ENCODE measurements at regions of chr15 and their contacts with region 1.

Region 1: GRCh38 chr15:44033894-44034293 is 161.2 kb downstream of the FRMD5 start:
- DNase-seq: peak; percentile 94
- H3K4me3 ChIP-seq: no peak overlapping the region
- H3K27ac ChIP-seq: peak overlapping the region; percentile 52
- H3K4me1 ChIP-seq: peaks cover 42% of the 10 kb centered on the region
- H3K27me3 ChIP-seq: no peaks in the 10 kb centered on the region
- CTCF ChIP-seq: no peak
- POLR2A ChIP-seq: no peak

Region 2: DNA sequence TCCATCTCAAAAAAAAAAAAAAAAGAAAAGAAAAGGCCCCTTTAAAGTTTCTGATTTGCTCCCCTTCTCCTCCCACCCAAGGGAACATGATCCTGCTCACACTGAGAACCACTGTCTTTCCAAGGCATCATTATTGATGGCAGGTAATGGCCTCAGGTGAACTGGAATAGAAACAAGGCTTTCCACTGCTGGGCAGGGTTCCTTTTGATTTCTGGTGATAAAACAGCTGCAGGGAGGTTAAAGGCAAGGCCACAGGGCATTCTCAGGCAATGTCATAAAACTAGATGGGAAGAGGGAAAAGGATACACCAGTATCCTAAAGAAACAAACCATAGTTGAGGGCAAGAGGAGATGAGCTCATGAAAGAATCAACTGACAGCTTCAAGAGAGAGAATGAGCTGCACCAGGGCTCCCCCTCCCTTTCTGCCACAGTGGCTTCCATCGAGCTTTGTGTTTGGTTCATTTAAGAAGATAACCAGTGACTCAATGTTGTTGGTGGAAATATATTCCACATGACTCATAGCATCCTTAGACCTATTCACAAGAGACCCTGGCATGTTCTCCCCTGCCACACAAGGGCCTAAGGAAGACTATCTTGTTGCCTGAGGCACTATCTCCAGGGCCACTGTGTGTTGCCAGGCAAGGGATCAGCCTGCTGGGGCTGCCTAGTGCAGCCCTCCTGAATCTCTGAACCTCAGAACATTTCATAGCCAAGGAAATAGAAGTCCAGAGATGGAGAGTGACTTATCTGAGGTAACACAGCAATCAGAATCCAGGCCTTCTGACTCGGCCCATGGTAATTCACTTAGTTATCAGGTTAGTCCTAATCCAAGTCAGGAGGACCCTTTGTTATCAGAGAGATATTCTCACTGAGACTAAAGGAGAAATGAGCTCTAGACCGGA is 120.6 kb before region 1 on chr15:
- CTCF ChIA-PET with region 1: interaction called, 4 read pairs
- POLR2A ChIA-PET with region 1: no interaction called
- dilution Hi-C with region 1: no loop called
- intact Hi-C with region 1: loop called (anchors 1 kb)
- DNase-seq: peak; percentile 98
- H3K4me3 ChIP-seq: no peak overlapping the region
- H3K27ac ChIP-seq: peak overlapping the region; percentile 89
- H3K4me1 ChIP-seq: peaks cover 38% of the 10 kb centered on the region
- H3K27me3 ChIP-seq: no peaks in the 10 kb centered on the region
- CTCF ChIP-seq: no peak
- POLR2A ChIP-seq: peak; percentile 46

Region 3: GRCh38 chr15:43998607-43999006 is 35.3 kb before region 1 on chr15:
- CTCF ChIA-PET with region 1: interaction called, 3 read pairs
- POLR2A ChIA-PET with region 1: no interaction called
- dilution Hi-C with region 1: no loop called
- intact Hi-C with region 1: loop called (anchors 2 kb)
- DNase-seq: peak; percentile 93
- H3K4me3 ChIP-seq: peak overlapping the region in 1 of 3 experiments; percentile 37
- H3K27ac ChIP-seq: peak overlapping the region; percentile 71
- H3K4me1 ChIP-seq: peaks cover 23% of the 10 kb centered on the region
- H3K27me3 ChIP-seq: no peaks in the 10 kb centered on the region
- CTCF ChIP-seq: no peak
- POLR2A ChIP-seq: no peak

Region 4: DNA sequence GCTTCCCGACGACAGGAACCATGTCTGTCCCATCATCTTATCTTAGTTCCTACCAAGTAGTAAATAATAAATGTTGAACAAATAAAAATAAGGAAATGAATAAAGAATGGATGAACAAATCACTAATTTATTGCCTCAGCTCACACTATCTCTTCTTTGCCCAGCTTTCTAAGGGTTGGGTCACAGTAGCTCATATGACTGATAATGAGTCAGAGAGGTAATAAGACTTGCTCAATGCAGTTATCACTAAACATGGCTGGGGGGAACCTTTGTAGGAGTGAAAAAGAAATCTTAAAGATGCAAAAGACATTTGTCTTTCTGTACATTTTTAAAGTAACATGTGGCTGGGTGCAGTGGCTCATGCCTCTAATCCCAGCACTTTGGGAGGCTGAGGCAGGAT is 24.8 kb before region 1 on chr15:
- CTCF ChIA-PET with region 1: interaction called, 11 read pairs
- POLR2A ChIA-PET with region 1: interaction called, 3 read pairs
- dilution Hi-C with region 1: no loop called
- intact Hi-C with region 1: no loop called
- DNase-seq: peak; percentile 40
- H3K4me3 ChIP-seq: no peak overlapping the region
- H3K27ac ChIP-seq: no peak overlapping the region
- H3K4me1 ChIP-seq: peaks cover 8% of the 10 kb centered on the region
- H3K27me3 ChIP-seq: no peaks in the 10 kb centered on the region
- CTCF ChIP-seq: no peak
- POLR2A ChIP-seq: no peak

Region 5: GRCh38 chr15:44130778-44131177 is 96.9 kb after region 1 on chr15:
- CTCF ChIA-PET with region 1: no interaction called
- POLR2A ChIA-PET with region 1: no interaction called
- dilution Hi-C with region 1: no loop called
- intact Hi-C with region 1: no loop called
- DNase-seq: no peak
- H3K4me3 ChIP-seq: no peak overlapping the region
- H3K27ac ChIP-seq: no peak overlapping the region
- H3K4me1 ChIP-seq: no peaks in the 10 kb centered on the region
- H3K27me3 ChIP-seq: no peaks in the 10 kb centered on the region
- CTCF ChIP-seq: no peak
- POLR2A ChIP-seq: no peak